A673 (cell line): ENCODE measurements at regions of chr4 and their contacts with region 1.

Region 1: DNA sequence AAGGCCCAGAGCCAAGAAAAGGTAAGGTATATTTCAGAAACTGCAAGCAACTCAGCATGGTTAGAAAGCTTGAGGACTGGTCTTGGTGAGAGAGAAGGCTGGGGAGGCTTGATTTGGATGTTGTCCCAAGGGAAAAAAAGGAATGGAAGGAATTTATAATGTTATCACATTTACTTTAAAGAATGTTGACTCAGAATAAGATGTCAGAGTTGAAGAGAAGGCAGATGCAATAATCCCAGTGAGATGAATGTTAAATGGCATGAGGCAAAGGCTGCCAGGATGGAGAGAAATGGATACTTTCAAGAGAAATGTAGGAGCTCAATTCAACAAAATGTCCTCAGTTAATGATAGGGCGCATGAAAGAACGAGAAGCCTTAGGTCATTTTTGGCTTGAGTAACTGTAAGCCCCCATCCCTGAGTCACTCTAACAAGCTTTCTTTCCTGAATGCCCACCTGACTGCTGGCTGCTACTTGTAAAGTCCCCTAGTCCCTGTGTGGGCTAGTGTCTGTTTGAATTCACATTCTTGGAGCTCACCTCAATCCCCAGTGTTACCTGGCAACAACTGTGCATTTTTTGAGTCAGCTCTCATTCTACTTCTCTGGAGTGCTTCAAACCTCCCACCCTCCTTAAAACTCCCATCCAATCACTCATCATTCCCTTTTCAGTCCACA is 103.0 kb upstream of the TAPT1 start:
- DNase-seq: peak; percentile 18
- H3K4me3 ChIP-seq: no peak overlapping the region
- H3K27ac ChIP-seq: no peak overlapping the region
- H3K4me1 ChIP-seq: no peaks in the 10 kb centered on the region
- H3K27me3 ChIP-seq: no peaks in the 10 kb centered on the region
- CTCF ChIP-seq: no peak

Region 2: DNA sequence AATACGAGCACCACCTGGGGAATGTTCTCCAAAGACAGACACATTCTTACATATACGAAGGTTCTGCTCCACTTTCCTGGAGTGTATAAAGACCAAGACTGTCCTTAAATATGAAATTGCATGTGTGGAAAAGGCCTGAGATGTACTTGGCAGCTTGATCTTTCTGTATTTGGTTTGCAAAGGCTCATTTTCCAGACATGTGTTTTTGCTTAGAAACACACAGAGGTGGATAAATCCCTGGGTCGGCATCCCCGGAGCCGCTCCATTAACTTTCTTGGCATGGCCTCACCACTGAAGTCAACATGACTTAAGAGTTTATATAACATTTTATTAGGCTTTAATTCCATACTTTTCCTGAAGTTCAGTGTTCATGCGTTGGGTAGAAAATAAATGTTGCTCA is 329.8 kb after region 1 on chr4:
- CTCF ChIA-PET with region 1: no interaction called
- POLR2A ChIA-PET with region 1: no interaction called
- intact Hi-C with region 1: no loop called
- DNase-seq: peak; percentile 45
- H3K4me3 ChIP-seq: no peak overlapping the region
- H3K27ac ChIP-seq: no peak overlapping the region
- H3K4me1 ChIP-seq: peaks cover 15% of the 10 kb centered on the region
- H3K27me3 ChIP-seq: no peaks in the 10 kb centered on the region
- CTCF ChIP-seq: no peak

Region 3: GRCh38 chr4:17708992-17709762 is 1379.9 kb after region 1 on chr4:
- CTCF ChIA-PET with region 1: no interaction called
- POLR2A ChIA-PET with region 1: no interaction called
- intact Hi-C with region 1: no loop called
- DNase-seq: no peak
- H3K4me3 ChIP-seq: no peak overlapping the region
- H3K27ac ChIP-seq: no peak overlapping the region
- H3K4me1 ChIP-seq: no peaks in the 10 kb centered on the region
- H3K27me3 ChIP-seq: no peaks in the 10 kb centered on the region
- CTCF ChIP-seq: no peak

Region 4: DNA sequence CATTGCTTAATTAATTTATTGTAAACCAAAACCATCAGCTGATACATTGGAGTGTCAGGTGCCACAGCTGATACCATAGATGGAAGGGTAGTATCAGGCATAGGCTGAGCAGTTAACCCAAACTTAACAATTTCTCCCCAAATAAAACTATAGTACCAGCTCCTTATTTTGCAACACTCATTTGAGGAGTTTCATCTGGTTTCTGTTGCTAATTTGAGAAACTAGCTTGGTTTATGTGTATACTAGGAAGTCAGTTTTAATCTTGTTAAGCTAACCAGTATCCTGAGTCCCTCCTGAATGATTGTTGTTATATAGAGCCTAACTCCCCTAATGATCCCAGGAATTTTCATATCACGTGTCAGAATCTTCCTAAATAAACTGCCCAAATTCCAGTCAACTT is 1468.5 kb after region 1 on chr4:
- CTCF ChIA-PET with region 1: no interaction called
- POLR2A ChIA-PET with region 1: interaction called, 21 read pairs
- intact Hi-C with region 1: no loop called
- DNase-seq: no peak
- H3K4me3 ChIP-seq: no peak overlapping the region
- H3K27ac ChIP-seq: no peak overlapping the region
- H3K4me1 ChIP-seq: no peaks in the 10 kb centered on the region
- H3K27me3 ChIP-seq: no peaks in the 10 kb centered on the region
- CTCF ChIP-seq: no peak